GM12878 (cell line): ENCODE measurements at regions of chr1 and their contacts with region 1.

Region 1: GRCh38 chr1:208025031-208025430 is 114.1 kb upstream of the CD34 start:
- DNase-seq: no peak
- ATAC-seq: no peak
- H3K4me3 ChIP-seq: no peak overlapping the region
- H3K27ac ChIP-seq: no peak overlapping the region
- H3K4me1 ChIP-seq: no peaks in the 10 kb centered on the region
- H3K27me3 ChIP-seq: peaks cover 5 to 9% of the 10 kb centered on the region in 2 experiments; a peak in 2 of 4 replicates
- CTCF ChIP-seq: no peak
- EP300 ChIP-seq: no peak
- POLR2A ChIP-seq: no peak
- RAD21 ChIP-seq: no peak

Region 2: GRCh38 chr1:207935166-207935583 is 89.9 kb before region 1 on chr1:
- CTCF ChIA-PET with region 1: no interaction called
- POLR2A ChIA-PET with region 1: no interaction called
- RAD21 ChIA-PET with region 1: no interaction called
- SMC1A ChIA-PET with region 1: no interaction called
- in situ Hi-C with region 1: no loop called
- intact Hi-C with region 1: no loop called
- DNase-seq: peak; percentile 87
- ATAC-seq: peak; percentile 99
- H3K4me3 ChIP-seq: no peak overlapping the region
- H3K27ac ChIP-seq: no peak overlapping the region
- H3K4me1 ChIP-seq: peaks cover 5% of the 10 kb centered on the region; the same call in 1 of the 2 replicates
- H3K27me3 ChIP-seq: no peaks in the 10 kb centered on the region; a peak in 1 of 4 replicates
- CTCF ChIP-seq: no peak
- EP300 ChIP-seq: peak; percentile 53 to 63; a peak in 1 of 4 replicates
- POLR2A ChIP-seq: no peak
- RAD21 ChIP-seq: no peak

Region 3: GRCh38 chr1:208013210-208013609 is 11.8 kb before region 1 on chr1:
- CTCF ChIA-PET with region 1: interaction called, 17 read pairs
- POLR2A ChIA-PET with region 1: no interaction called
- RAD21 ChIA-PET with region 1: no interaction called
- SMC1A ChIA-PET with region 1: interaction called, 5 read pairs
- in situ Hi-C with region 1: no loop called
- intact Hi-C with region 1: no loop called
- DNase-seq: no peak
- ATAC-seq: no peak
- H3K4me3 ChIP-seq: no peak overlapping the region
- H3K27ac ChIP-seq: no peak overlapping the region
- H3K4me1 ChIP-seq: no peaks in the 10 kb centered on the region
- H3K27me3 ChIP-seq: peaks cover 5% of the 10 kb centered on the region in 2 experiments
- CTCF ChIP-seq: no peak
- EP300 ChIP-seq: no peak
- POLR2A ChIP-seq: no peak
- RAD21 ChIP-seq: no peak

Region 4: DNA sequence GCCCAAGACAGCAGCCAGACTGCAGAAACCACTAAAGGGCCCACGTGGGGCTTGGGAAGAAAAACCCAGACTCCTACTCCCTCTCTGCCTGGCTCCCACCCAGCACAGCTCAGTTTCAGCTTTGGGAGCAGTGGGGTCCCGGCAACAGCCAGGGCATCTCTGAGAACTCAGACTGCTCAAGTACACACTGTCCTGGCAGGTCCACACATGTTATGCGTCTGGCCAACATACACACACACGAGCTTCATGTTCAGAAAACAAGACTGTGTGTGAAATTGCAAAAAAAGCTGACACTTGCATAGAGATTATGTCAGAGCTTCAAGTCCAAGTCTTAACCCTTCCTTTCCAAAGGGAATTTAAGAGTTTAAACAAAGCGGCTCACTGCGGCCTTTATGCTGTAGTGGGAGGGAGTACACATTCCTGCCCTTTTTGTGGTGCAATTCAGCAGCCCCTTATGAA is 22.5 kb after region 1 on chr1:
- CTCF ChIA-PET with region 1: interaction called, 12 read pairs
- POLR2A ChIA-PET with region 1: no interaction called
- RAD21 ChIA-PET with region 1: no interaction called
- SMC1A ChIA-PET with region 1: no interaction called
- in situ Hi-C with region 1: no loop called
- intact Hi-C with region 1: no loop called
- DNase-seq: no peak
- ATAC-seq: no peak
- H3K4me3 ChIP-seq: no peak overlapping the region
- H3K27ac ChIP-seq: no peak overlapping the region
- H3K4me1 ChIP-seq: no peaks in the 10 kb centered on the region
- H3K27me3 ChIP-seq: peaks cover 0 to 6% of the 10 kb centered on the region in 2 experiments; a peak in 2 of 4 replicates
- CTCF ChIP-seq: no peak
- EP300 ChIP-seq: no peak
- POLR2A ChIP-seq: no peak
- RAD21 ChIP-seq: no peak

Region 5: GRCh38 chr1:208238710-208239472 is 213.9 kb after region 1 on chr1:
- CTCF ChIA-PET with region 1: interaction called, 94 read pairs
- POLR2A ChIA-PET with region 1: no interaction called
- RAD21 ChIA-PET with region 1: interaction called, 59 read pairs
- SMC1A ChIA-PET with region 1: interaction called, 27 read pairs
- in situ Hi-C with region 1: no loop called
- intact Hi-C with region 1: loop called (anchors 2 kb)
- DNase-seq: no peak
- ATAC-seq: peak; percentile 78
- H3K4me3 ChIP-seq: no peak overlapping the region
- H3K27ac ChIP-seq: no peak overlapping the region
- H3K4me1 ChIP-seq: peaks cover 17% of the 10 kb centered on the region
- H3K27me3 ChIP-seq: peaks cover 8 to 17% of the 10 kb centered on the region in 2 experiments
- CTCF ChIP-seq: peak; percentile 42 to 71 (median 66)
- EP300 ChIP-seq: no peak
- POLR2A ChIP-seq: no peak
- RAD21 ChIP-seq: peak; percentile 52